ENCODE measurements at regions of chr10 and their contacts with region 1.

Region 1: DNA sequence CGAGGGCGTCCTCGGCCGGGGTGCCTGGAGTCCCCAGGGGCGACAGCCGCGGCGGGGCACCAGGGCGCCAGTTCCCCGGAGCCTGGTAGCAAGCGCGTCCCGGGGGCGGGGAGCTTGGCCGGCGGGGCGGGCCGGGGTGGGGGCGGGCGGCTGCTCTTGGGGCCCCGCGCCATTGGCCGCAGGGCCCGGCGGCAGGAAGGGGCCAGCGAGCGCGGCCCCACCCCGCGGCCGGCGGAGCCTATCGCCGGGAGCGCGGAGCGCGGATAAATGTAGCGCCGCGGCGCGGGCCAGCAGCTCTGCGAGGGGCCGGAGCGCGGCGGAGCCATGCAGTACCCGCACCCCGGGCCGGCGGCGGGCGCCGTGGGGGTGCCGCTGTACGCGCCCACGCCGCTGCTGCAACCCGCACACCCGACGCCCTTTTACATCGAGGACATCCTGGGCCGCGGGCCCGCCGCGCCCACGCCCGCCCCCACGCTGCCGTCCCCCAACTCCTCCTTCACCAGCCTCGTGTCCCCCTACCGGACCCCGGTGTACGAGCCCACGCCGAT is at the start of gene HHEX:
- DNase-seq: peak; percentile 84
- H3K4me3 ChIP-seq: peak within 1 kb of the TSS; percentile 67 to 85 (median 77)
- H3K27ac ChIP-seq: peak within 1 kb of the TSS; percentile 81 to 86 (median 84)
- H3K4me1 ChIP-seq: peaks cover 10 to 45% (median 38%) of the 10 kb centered on the region in 4 donors
- H3K27me3 ChIP-seq: peaks cover 0 to 38% (median 2%) of the 10 kb centered on the region in 4 donors
- CTCF ChIP-seq: no peak
- EP300 ChIP-seq: no peak
- POLR2A ChIP-seq: no peak
- total RNA-seq, gene HHEX: 4.6 to 8.6 (median 8.3) TPM

Region 2: GRCh38 chr10:92592761-92593618 is 96.7 kb before region 1 on chr10 and contains the start of gene KIF11:
- intact Hi-C with region 1: loop called (anchors 5 kb)
- DNase-seq: peak; percentile 99
- H3K4me3 ChIP-seq: peak within 1 kb of the TSS; percentile 65 to 77 (median 70)
- H3K27ac ChIP-seq: peak within 1 kb of the TSS; percentile 92 to 98 (median 94)
- H3K4me1 ChIP-seq: peaks cover 21 to 27% (median 27%) of the 10 kb centered on the region in 4 donors
- H3K27me3 ChIP-seq: no peaks in the 10 kb centered on the region
- CTCF ChIP-seq: no peak
- EP300 ChIP-seq: no peak
- POLR2A ChIP-seq: peak; percentile 62
- total RNA-seq, gene KIF11: 0.33 to 0.80 (median 0.40) TPM

Region 3: DNA sequence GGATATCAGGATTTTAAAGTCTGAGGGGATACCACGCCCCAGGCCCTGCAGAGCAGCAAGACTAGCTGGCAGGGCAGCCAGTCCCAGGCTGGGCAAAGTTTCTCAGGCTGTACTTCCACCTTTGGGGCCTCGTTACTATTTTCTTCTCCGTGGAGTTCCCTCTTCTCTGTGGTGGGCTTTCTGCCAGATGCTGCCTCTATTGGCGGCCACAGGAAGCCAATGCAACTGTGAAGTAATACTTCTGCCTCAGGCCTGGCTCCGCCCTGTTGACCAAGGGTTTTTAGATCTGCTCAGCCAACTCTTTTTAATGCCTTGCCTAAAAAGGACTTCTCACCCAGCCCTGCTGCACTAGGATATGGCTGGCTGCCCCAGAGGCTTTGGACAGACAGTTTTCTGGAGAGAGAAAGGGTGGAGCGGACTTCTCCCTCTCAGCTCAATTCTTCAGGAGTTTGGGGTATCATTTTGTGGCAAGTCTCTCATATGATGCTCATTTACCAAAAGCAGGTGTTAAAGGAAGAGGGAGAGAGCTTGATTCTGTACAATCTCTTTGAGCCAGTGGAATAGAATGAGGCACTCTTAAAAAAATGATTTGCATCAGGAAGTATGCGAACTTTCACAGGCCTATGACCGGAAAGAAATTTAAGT is 67.5 kb after region 1 on chr10:
- intact Hi-C with region 1: loop called (anchors 5 kb)
- DNase-seq: peak; percentile 96
- H3K4me3 ChIP-seq: peak overlapping the region in 3 of 4 donors; percentile 10 to 29 (median 17)
- H3K27ac ChIP-seq: peak overlapping the region; percentile 86 to 89 (median 86)
- H3K4me1 ChIP-seq: peaks cover 21 to 61% (median 52%) of the 10 kb centered on the region in 4 donors
- H3K27me3 ChIP-seq: no peaks in the 10 kb centered on the region
- CTCF ChIP-seq: peak in 1 of 3 experiments; percentile 39
- EP300 ChIP-seq: no peak
- POLR2A ChIP-seq: no peak

Region 4: GRCh38 chr10:92848441-92849233 is 158.9 kb after region 1 on chr10 and contains the start of gene EXOC6:
- intact Hi-C with region 1: loop called (anchors 10 kb)
- DNase-seq: no peak
- H3K4me3 ChIP-seq: peak within 1 kb of the TSS; percentile 84 to 99 (median 94)
- H3K27ac ChIP-seq: peak within 1 kb of the TSS; percentile 83 to 91 (median 88)
- H3K4me1 ChIP-seq: peaks cover 5 to 23% (median 19%) of the 10 kb centered on the region in 4 donors
- H3K27me3 ChIP-seq: no peaks in the 10 kb centered on the region
- CTCF ChIP-seq: peak in 1 of 3 experiments; percentile 31
- EP300 ChIP-seq: no peak
- POLR2A ChIP-seq: no peak
- total RNA-seq, gene EXOC6: 14.1 to 34.9 (median 16.2) TPM